Activated CD8-positive, alpha-beta memory T cell treated with anti-CD3 and anti-CD28 coated beads, Interleukin-2, amount 10 ng/mL, durations not matched to agents 7 days and 5 days (primary cell): ENCODE measurements at regions of chr3 and their contacts with region 1.

Region 1: GRCh38 chr3:94004301-94004910 is 24.0 kb downstream of the STX19 start:
- DNase-seq: no peak
- ATAC-seq: peak; percentile 76
- H3K4me3 Mint-ChIP-seq: peak overlapping the region; percentile 70
- H3K27ac Mint-ChIP-seq: peak overlapping the region; percentile 76
- H3K4me1 Mint-ChIP-seq: peaks cover 17% of the 10 kb centered on the region
- H3K27me3 Mint-ChIP-seq: no peaks in the 10 kb centered on the region

Region 2: GRCh38 chr3:93981649-93982048 is 22.8 kb before region 1 on chr3:
- CTCF ChIA-PET with region 1: no interaction called
- DNase-seq: no peak
- ATAC-seq: no peak
- H3K4me3 Mint-ChIP-seq: peak overlapping the region; percentile 26
- H3K27ac Mint-ChIP-seq: no peak overlapping the region
- H3K4me1 Mint-ChIP-seq: peaks cover 20% of the 10 kb centered on the region
- H3K27me3 Mint-ChIP-seq: no peaks in the 10 kb centered on the region

Region 3: GRCh38 chr3:94069194-94069813 is 64.9 kb after region 1 on chr3:
- CTCF ChIA-PET with region 1: interaction called, 31 read pairs
- DNase-seq: no peak
- ATAC-seq: no peak
- H3K4me3 Mint-ChIP-seq: no peak overlapping the region
- H3K27ac Mint-ChIP-seq: no peak overlapping the region
- H3K4me1 Mint-ChIP-seq: peaks cover 66% of the 10 kb centered on the region
- H3K27me3 Mint-ChIP-seq: no peaks in the 10 kb centered on the region